PC-9 (cell line): ENCODE measurements at regions of chr1 and their contacts with region 1.

Region 1: GRCh38 chr1:198948895-198949659 is 310.2 kb downstream of the PTPRC start:
- DNase-seq: no peak
- H3K4me3 ChIP-seq: no peak overlapping the region
- H3K27ac ChIP-seq: no peak overlapping the region
- H3K4me1 ChIP-seq: no peaks in the 10 kb centered on the region
- H3K27me3 ChIP-seq: no peaks in the 10 kb centered on the region
- CTCF ChIP-seq: no peak

Region 2: GRCh38 chr1:198967566-198967965 is 18.5 kb after region 1 on chr1:
- CTCF ChIA-PET with region 1: no interaction called
- POLR2A ChIA-PET with region 1: no interaction called
- intact Hi-C with region 1: no loop called
- DNase-seq: no peak
- H3K4me3 ChIP-seq: no peak overlapping the region
- H3K27ac ChIP-seq: no peak overlapping the region
- H3K4me1 ChIP-seq: no peaks in the 10 kb centered on the region; the same call in 1 of the 2 replicates
- H3K27me3 ChIP-seq: no peaks in the 10 kb centered on the region
- CTCF ChIP-seq: no peak

Region 3: GRCh38 chr1:199046618-199047017 is 97.5 kb after region 1 on chr1:
- CTCF ChIA-PET with region 1: no interaction called
- POLR2A ChIA-PET with region 1: no interaction called
- intact Hi-C with region 1: no loop called
- DNase-seq: no peak
- H3K4me3 ChIP-seq: no peak overlapping the region
- H3K27ac ChIP-seq: no peak overlapping the region
- H3K4me1 ChIP-seq: no peaks in the 10 kb centered on the region
- H3K27me3 ChIP-seq: no peaks in the 10 kb centered on the region
- CTCF ChIP-seq: no peak

Region 4: DNA sequence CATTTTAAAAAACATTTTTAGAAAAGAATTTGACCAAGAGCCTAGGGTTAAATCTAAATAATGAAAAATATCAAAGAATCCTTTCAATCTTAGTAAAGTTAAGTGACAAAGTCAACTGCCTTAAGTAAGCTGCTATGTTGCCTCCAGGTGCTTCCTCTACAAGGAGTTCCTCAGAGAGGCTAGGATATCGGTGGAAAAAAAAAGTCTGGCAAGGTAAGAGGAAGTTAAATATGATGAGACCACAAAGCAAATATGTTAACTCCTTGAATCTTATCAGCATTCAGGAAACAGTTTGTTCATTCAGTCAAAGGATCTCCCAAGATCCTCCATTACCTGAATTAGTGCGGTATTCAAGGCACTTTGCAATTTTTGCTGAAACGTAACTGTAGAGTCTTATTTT is 253.3 kb after region 1 on chr1:
- CTCF ChIA-PET with region 1: interaction called, 14 read pairs
- POLR2A ChIA-PET with region 1: no interaction called
- intact Hi-C with region 1: no loop called
- DNase-seq: peak in 1 of 2 experiments; percentile 35
- H3K4me3 ChIP-seq: no peak overlapping the region
- H3K27ac ChIP-seq: no peak overlapping the region
- H3K4me1 ChIP-seq: no peaks in the 10 kb centered on the region
- H3K27me3 ChIP-seq: no peaks in the 10 kb centered on the region
- CTCF ChIP-seq: no peak